Heart right ventricle (tissue), 16 donors: ENCODE measurements at regions of chr6 and their contacts with region 1.

Region 1: GRCh38 chr6:30556066-30556905 is at the start of gene GNL1:
- DNase-seq: peak; percentile 92 to 95
- ATAC-seq: peak; percentile 78 to 91 (median 84)
- H3K4me3 ChIP-seq: peak within 1 kb of the TSS; percentile 65 to 99 (median 94)
- H3K27ac ChIP-seq: peak within 1 kb of the TSS; percentile 92 to 99 (median 96)
- H3K4me1 ChIP-seq: peaks cover 7 to 34% (median 29%) of the 10 kb centered on the region in 9 donors
- H3K27me3 ChIP-seq: no peaks in the 10 kb centered on the region
- CTCF ChIP-seq: peak in 2 of 9 donors; percentile 8 to 16
- total RNA-seq, gene GNL1: 17.3 to 34.1 (median 19.8) TPM

Region 2: DNA sequence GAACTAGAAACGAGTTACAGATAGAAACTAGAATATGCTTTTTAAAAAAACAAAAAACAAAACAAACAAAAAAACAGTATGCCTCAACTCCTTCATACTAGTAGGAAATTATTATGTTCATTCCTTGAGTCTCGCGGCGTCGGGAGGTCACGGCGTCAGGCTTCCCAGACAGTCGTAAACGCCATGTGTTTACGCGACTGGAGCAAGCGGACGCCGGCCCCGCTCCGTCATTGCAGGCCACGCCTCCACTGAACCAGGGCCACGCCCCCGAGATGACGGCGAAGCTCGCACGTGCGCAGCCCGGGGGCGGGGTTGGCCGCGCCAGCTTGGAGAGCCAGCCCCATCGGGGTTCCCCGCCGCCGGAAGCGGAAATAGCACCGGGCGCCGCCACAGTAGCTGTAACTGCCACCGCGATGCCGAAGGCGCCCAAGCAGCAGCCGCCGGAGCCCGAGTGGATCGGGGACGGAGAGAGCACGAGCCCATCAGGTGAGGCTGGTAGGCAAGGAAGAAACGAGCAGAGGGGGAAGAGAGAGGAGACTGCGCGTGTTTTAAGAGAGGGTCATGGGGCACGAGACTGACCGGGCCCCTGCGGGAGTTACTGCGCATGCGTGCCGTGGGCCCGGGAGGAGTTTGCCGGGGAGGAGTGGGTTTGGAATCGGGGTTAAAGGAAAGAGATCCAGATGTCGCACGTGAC is 14.9 kb after region 1 on chr6 and contains the start of gene ABCF1:
- intact Hi-C with region 1: loop called in 4 of 10 experiments (anchors 1 to 2 kb)
- DNase-seq: peak; percentile 97 to 99
- ATAC-seq: peak; percentile 98 to 100 (median 99)
- H3K4me3 ChIP-seq: peak within 1 kb of the TSS; percentile 53 to 87 (median 72)
- H3K27ac ChIP-seq: peak within 1 kb of the TSS; percentile 57 to 94 (median 88)
- H3K4me1 ChIP-seq: peaks cover 10 to 38% (median 29%) of the 10 kb centered on the region in 9 donors
- H3K27me3 ChIP-seq: no peaks in the 10 kb centered on the region
- CTCF ChIP-seq: no peak
- total RNA-seq, gene ABCF1: 37.1 to 49.1 (median 42.1) TPM

Region 3: GRCh38 chr6:31087494-31088089 is 531.3 kb after region 1 on chr6:
- intact Hi-C with region 1: loop called in 1 of 10 experiments (anchors 10 kb)
- DNase-seq: peak; percentile 83 to 85
- ATAC-seq: peak; percentile 84 to 97 (median 94)
- H3K4me3 ChIP-seq: no peak overlapping the region
- H3K27ac ChIP-seq: peak overlapping the region in 1 of 10 donors; percentile 2
- H3K4me1 ChIP-seq: peaks cover 0 to 19% (median 8%) of the 10 kb centered on the region in 9 donors
- H3K27me3 ChIP-seq: no peaks in the 10 kb centered on the region
- CTCF ChIP-seq: peak; percentile 73 to 87 (median 81)